K562 (cell line): ENCODE measurements at regions of chr2 and their contacts with region 1.

Region 1: DNA sequence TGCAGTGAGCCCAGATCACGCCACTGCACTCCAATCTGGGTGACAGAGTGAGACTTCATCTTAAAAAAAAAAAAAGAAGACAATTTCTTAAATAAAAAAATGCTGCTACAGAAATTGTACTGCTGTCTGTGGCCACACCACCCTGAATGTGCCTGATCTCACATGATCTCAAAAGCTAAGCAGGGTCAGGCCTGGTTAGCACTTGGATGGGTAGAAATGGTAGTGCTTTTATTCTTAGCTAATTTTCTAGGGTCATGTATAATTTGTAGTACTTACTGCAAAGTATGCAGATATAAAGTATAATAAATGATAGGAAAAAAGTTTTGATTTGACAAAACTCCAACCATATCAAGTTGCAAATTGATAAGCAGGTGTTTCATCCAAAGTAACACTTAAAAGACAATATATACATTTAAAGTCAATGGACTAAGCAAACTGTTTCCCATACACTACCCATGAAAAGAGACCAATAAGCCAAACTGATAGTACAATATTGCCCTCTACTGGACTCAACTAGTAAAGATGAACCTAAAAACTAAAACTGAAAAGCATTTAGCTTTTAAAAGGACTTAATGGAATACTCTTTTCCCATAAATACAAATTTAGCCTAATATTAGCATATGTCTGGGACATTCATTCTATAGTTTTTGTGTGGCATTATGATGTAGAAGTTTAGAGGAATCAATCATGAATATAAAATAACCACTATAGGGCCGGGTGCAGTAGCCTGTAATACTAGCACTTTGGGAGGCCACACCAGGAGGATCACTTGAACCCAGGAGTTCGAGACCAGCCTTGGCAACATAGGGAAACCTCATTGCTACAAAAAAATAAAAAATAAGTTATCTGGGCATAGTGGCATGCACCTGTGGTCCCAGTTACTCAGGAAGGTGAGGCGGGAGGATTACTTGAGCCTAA is 18.6 kb upstream of the PEX13 start:
- DNase-seq: peak; percentile 20 to 65 (median 39)
- ATAC-seq: peak; percentile 83
- H3K4me3 ChIP-seq: no peak overlapping the region
- H3K27ac ChIP-seq: no peak overlapping the region
- H3K4me1 ChIP-seq: no peaks in the 10 kb centered on the region
- H3K27me3 ChIP-seq: no peaks in the 10 kb centered on the region
- CTCF ChIP-seq: peak; percentile 38 to 83 (median 48); a peak in 4 of 6 replicates
- EP300 ChIP-seq: no peak
- POLR2A ChIP-seq: no peak
- RAD21 ChIP-seq: peak; percentile 82 to 95

Region 2: GRCh38 chr2:60707750-60708371 is 291.0 kb before region 1 on chr2:
- CTCF ChIA-PET with region 1: interaction called, 14 read pairs
- POLR2A ChIA-PET with region 1: interaction called, 3 read pairs
- in situ Hi-C with region 1: loop called (anchors 5 kb)
- intact Hi-C with region 1: loop called (anchors 1 kb)
- DNase-seq: peak; percentile 39 to 48 (median 43)
- ATAC-seq: peak; percentile 73
- H3K4me3 ChIP-seq: no peak overlapping the region
- H3K27ac ChIP-seq: no peak overlapping the region
- H3K4me1 ChIP-seq: peaks cover 0 to 2% of the 10 kb centered on the region in 2 experiments; a peak in 1 of 5 replicates
- H3K27me3 ChIP-seq: peaks cover 8 to 18% of the 10 kb centered on the region in 2 experiments
- CTCF ChIP-seq: peak; percentile 27 to 79 (median 59); a peak in 5 of 6 replicates
- EP300 ChIP-seq: no peak
- POLR2A ChIP-seq: no peak
- RAD21 ChIP-seq: peak; percentile 58 to 75

Region 3: GRCh38 chr2:60794277-60794863 is 204.5 kb before region 1 on chr2:
- CTCF ChIA-PET with region 1: interaction called, 26 read pairs
- POLR2A ChIA-PET with region 1: no interaction called
- in situ Hi-C with region 1: no loop called
- intact Hi-C with region 1: no loop called
- DNase-seq: peak; percentile 24 to 32 (median 28)
- ATAC-seq: no peak
- H3K4me3 ChIP-seq: no peak overlapping the region
- H3K27ac ChIP-seq: no peak overlapping the region
- H3K4me1 ChIP-seq: no peaks in the 10 kb centered on the region; a peak in 1 of 5 replicates
- H3K27me3 ChIP-seq: no peaks in the 10 kb centered on the region
- CTCF ChIP-seq: peak; percentile 23 to 67 (median 28); a peak in 4 of 6 replicates
- EP300 ChIP-seq: no peak
- POLR2A ChIP-seq: no peak
- RAD21 ChIP-seq: peak; percentile 70 to 72

Region 4: GRCh38 chr2:60806988-60807681 is 191.8 kb before region 1 on chr2:
- CTCF ChIA-PET with region 1: no interaction called
- POLR2A ChIA-PET with region 1: interaction called, 3 read pairs
- in situ Hi-C with region 1: loop called (anchors 5 kb)
- intact Hi-C with region 1: loop called (anchors 1 kb)
- DNase-seq: peak; percentile 70 to 92 (median 79)
- ATAC-seq: peak; percentile 89
- H3K4me3 ChIP-seq: no peak overlapping the region
- H3K27ac ChIP-seq: peak overlapping the region; percentile 78
- H3K4me1 ChIP-seq: peaks cover 27 to 28% of the 10 kb centered on the region in 2 experiments
- H3K27me3 ChIP-seq: no peaks in the 10 kb centered on the region
- CTCF ChIP-seq: no peak
- EP300 ChIP-seq: peak; percentile 48
- POLR2A ChIP-seq: peak; percentile 57; the same call in 1 of the 2 replicates
- RAD21 ChIP-seq: peak in 1 of 2 experiments; percentile 2; a peak in 2 of 4 replicates